Motor neuron (in vitro differentiated cells): ENCODE measurements at regions of chr2 and their contacts with region 1.

Region 1: DNA sequence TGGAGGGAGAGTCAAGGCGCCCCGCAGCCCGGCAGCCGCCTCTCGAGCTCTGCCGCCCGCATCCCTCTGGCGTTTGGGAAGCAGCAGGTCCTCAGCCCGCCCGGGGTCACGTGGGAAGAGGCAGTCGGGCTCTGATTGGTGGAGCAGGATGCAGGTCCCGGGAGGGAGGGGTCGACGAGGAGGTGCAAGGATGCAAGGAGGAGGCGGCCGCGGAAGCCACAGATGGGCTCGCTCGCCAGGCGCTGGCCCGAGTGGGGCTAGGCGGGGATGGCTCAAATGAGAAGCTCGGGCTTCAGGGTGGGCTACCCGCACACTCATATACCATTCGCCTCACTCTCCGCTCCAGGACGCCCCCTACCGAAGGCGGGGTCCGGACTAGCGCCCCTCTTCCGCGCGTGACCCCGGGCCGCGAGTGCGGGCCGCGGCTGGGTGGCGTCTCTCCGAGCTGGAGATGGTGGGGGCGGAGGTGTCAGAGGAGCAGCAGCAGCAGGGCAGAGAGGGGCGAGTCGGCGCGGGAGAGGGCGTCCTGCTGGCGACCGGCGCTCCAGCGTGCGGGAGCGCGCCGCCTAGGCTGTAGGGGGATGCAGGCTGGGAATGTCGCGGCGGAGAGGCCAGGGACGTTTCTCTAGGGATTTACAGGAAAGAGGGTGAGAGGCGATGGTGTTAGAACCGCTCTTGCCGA is at the start of gene TMEFF2:
- ATAC-seq: peak; percentile 83 to 91 (median 88)
- H3K4me3 ChIP-seq: peak within 1 kb of the TSS; percentile 40 to 69 (median 61)
- H3K27ac ChIP-seq: peak within 1 kb of the TSS; percentile 58 to 72
- H3K4me1 ChIP-seq: peaks cover 0 to 5% of the 10 kb centered on the region in 2 donors
- total RNA-seq, gene TMEFF2: 0.35 to 15.8 (median 11.9) TPM

Region 2: DNA sequence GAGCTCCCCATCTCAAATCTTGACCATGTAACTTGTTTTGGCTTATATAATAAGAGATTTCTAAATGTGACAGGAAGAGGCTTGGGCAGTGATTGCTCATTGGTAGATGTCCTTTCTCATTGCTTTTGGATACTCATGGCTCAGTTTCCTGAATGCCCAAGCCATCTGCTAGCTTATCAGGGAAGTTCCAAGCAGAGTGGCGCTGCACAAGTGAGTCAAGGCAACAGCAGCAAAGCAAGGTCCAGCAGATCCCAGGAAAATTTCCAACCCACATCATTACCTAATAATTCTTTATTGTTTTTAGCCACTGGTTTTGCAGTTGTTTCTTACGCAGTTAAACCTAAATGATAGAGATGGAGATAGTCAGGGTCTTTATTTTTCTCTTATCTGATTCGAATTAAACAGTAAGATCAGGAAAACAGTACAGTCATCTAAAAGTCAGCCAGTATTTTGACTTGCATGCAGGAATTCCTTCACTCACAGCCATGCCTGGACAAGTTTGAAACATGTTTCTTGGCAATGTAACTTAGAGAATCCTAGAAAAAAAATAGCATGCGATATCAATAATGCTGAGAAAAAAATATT is 349.5 kb after region 1 on chr2:
- in situ Hi-C with region 1: loop called in 1 of 9 experiments (anchors 25 kb)
- ATAC-seq: peak in 2 of 8 experiments; percentile 89 to 92
- H3K4me3 ChIP-seq: no peak overlapping the region
- H3K27ac ChIP-seq: no peak overlapping the region
- H3K4me1 ChIP-seq: peaks cover 0 to 5% of the 10 kb centered on the region in 2 donors